ENCODE measurements at regions of chr14 and their contacts with region 1.

Region 1: GRCh38 chr14:64196814-64197411 is 97.3 kb downstream of the ESR2 start:
- DNase-seq: peak; percentile 84
- ATAC-seq: peak; percentile 82
- H3K4me3 ChIP-seq: peak overlapping the region in 4 of 5 experiments; percentile 40 to 53 (median 46)
- H3K4me3 Mint-ChIP-seq: peak overlapping the region; percentile 90
- H3K27ac ChIP-seq: peak overlapping the region; percentile 94 to 98
- H3K27ac Mint-ChIP-seq: peak overlapping the region; percentile 94
- H3K4me1 ChIP-seq: peaks cover 51 to 53% of the 10 kb centered on the region in 2 donors
- H3K4me1 Mint-ChIP-seq: peaks cover 57% of the 10 kb centered on the region
- H3K27me3 ChIP-seq: no peaks in the 10 kb centered on the region
- H3K27me3 Mint-ChIP-seq: no peaks in the 10 kb centered on the region
- CTCF ChIP-seq: no peak

Region 2: DNA sequence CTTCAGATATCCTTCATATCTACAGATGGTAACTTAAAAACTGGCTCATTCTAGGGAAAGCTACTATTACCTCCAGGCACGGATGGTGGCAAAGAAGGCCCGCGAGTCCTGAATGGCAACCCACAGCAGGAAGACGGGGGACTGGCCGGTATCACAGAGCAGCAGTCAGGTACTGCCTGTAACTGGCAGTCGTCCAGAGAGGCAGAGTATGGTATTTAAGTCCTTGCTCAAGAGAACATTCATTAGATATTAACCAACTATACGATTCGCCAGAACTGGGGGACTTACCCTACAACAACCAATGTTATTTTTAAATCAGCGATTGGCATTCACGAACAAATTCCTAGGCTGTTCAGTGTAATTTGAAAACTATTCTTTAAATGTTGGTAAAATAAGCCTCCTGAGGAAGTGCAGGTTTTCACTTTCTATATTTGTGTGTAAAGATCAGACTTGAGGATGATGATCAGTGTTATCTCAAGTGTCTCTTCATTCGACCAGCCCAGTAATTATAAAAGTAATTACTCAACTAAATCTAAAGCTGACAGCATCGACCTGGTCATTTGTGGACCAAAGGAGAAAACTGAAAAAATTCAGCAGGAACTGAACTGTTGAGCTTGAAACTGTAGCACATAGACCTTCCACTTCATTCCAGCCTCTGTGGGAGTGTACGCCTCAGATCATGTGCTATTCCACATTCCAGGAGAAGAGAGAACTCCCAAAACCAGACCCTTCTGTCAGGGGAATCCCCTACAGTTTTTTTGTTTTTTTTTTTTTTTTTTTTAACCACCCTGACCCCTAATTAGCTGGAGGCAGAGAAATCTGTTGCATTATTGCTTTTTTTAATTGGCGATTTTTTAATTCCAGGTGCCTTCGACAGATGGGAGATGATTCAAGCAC is 21.7 kb after region 1 on chr14:
- CTCF ChIA-PET with region 1: no interaction called
- POLR2A ChIA-PET with region 1: no interaction called
- intact Hi-C with region 1: loop called (anchors 2 kb)
- DNase-seq: peak; percentile 30
- ATAC-seq: no peak
- H3K4me3 ChIP-seq: no peak overlapping the region
- H3K4me3 Mint-ChIP-seq: peak overlapping the region; percentile 61
- H3K27ac ChIP-seq: peak overlapping the region in 1 of 2 donors; percentile 19
- H3K27ac Mint-ChIP-seq: peak overlapping the region; percentile 78
- H3K4me1 ChIP-seq: peaks cover 57 to 61% of the 10 kb centered on the region in 2 donors
- H3K4me1 Mint-ChIP-seq: peaks cover 64% of the 10 kb centered on the region
- H3K27me3 ChIP-seq: no peaks in the 10 kb centered on the region
- H3K27me3 Mint-ChIP-seq: no peaks in the 10 kb centered on the region
- CTCF ChIP-seq: no peak